Left colon (tissue), 2 donors: ENCODE measurements at regions of chr4 and their contacts with region 1.

Region 1: GRCh38 chr4:157992038-157992705 is 180.7 kb downstream of the GASK1B start:
- DNase-seq: peak in 1 of 2 donors; percentile 11
- ATAC-seq: peak; percentile 69

Region 2: GRCh38 chr4:157898836-157899605 is 93.2 kb before region 1 on chr4:
- intact Hi-C with region 1: no loop called
- DNase-seq: no peak
- ATAC-seq: no peak

Region 3: GRCh38 chr4:158172261-158173258 is 180.4 kb after region 1 on chr4 and contains the start of gene GASK1B:
- intact Hi-C with region 1: loop called in 1 of 2 experiments (anchors 2 kb)
- DNase-seq: peak in 1 of 2 donors; percentile 53
- ATAC-seq: peak; percentile 93
- total RNA-seq, gene GASK1B: 7.8 to 19.6 TPM

Region 4: DNA sequence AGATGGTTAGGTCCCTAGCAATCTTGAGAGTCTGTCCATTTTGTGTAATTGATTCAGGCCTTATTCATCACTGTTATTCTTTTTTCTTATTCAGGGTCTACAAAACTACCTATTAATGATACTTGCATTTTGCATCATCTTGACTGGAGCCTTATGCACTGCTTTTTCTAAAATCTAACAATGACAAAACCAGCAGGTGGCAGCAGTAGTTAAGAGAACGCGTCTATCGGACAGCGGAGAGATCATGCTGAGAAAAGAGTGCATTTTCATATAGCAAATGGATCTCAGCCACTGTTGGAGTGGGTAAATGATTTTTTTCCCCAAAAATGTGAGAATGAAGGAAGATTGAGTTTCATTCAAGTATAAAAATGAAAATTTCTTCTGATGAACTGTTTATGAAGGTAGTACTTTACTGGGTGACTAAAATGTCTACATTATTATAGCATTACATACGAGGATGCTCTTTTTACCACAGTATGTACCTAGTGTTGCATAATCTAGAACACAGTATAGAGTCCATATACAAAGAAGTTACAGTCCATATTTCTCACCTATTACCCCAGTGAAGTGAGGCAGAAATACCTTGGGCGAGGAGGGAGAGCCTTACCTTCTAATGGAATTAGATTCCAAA is 261.3 kb after region 1 on chr4:
- intact Hi-C with region 1: loop called in 1 of 2 experiments (anchors 5 kb)
- DNase-seq: peak in 1 of 2 donors; percentile 45
- ATAC-seq: peak; percentile 67